ENCODE measurements at regions of chr2 and their contacts with region 1.

Region 1: GRCh38 chr2:152615177-152615576 is 102.1 kb downstream of the PRPF40A start:
- DNase-seq: no peak
- ATAC-seq: no peak
- H3K4me3 ChIP-seq: no peak overlapping the region
- H3K4me3 Mint-ChIP-seq: no peak overlapping the region
- H3K27ac ChIP-seq: no peak overlapping the region
- H3K27ac Mint-ChIP-seq: no peak overlapping the region
- H3K4me1 ChIP-seq: peaks cover 0 to 9% of the 10 kb centered on the region in 2 experiments
- H3K4me1 Mint-ChIP-seq: peaks cover 0 to 17% (median 6%) of the 10 kb centered on the region in 3 donors
- H3K27me3 ChIP-seq: no peaks in the 10 kb centered on the region
- H3K27me3 Mint-ChIP-seq: no peaks in the 10 kb centered on the region

Region 2: GRCh38 chr2:152186262-152186661 is 428.9 kb before region 1 on chr2:
- CTCF ChIA-PET with region 1: no interaction called
- POLR2A ChIA-PET with region 1: interaction called in 1 of 2 experiments, 20 read pairs
- DNase-seq: no peak
- ATAC-seq: no peak
- H3K4me3 ChIP-seq: no peak overlapping the region
- H3K4me3 Mint-ChIP-seq: no peak overlapping the region
- H3K27ac ChIP-seq: no peak overlapping the region
- H3K27ac Mint-ChIP-seq: no peak overlapping the region
- H3K4me1 ChIP-seq: no peaks in the 10 kb centered on the region
- H3K4me1 Mint-ChIP-seq: peaks cover 7 to 14% (median 8%) of the 10 kb centered on the region in 3 donors
- H3K27me3 ChIP-seq: peaks cover 0 to 8% of the 10 kb centered on the region in 2 experiments
- H3K27me3 Mint-ChIP-seq: peaks cover 11 to 24% of the 10 kb centered on the region in 2 donors

Measured in T-cell (primary cell).